CD4-positive, alpha-beta memory T cell (primary cell): ENCODE measurements at regions of chr12 and their contacts with region 1.

Region 1: DNA sequence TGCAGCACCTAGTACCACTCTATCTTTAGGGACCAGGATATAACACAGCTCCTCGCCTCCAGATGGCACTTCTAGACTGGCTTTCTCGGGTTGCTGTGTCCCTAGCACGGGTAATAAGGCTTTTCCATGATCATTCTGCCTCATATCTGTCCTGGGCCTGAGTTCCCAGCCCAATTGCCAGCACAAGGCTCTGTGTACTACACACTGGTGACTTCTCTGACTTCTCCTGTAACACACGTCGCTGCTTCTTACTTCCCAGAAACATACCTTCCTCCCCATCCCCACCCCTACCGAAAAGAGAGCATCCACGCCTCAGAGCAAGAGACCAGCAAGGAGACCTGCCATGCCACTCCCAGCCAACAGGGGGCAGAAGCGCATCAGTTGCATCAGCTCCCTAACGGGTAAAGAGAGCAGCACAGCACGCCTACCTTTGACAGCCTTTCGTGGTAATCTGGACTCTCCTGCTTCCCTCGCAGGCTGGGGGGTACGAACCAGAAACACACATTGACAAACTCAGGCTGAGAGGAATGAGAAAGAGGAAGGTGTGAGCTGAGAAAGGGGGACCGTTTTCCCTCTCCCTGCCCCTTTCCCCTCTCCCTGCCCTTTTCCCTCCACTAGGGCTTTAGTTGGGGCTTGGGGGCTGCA is 21.2 kb upstream of the ZNF740 start:
- DNase-seq: peak; percentile 83 to 85 (median 85)
- H3K4me3 ChIP-seq: no peak overlapping the region
- H3K4me3 Mint-ChIP-seq: peak overlapping the region in 2 of 8 donors; percentile 2 to 54
- H3K27ac ChIP-seq: no peak overlapping the region
- H3K27ac Mint-ChIP-seq: peak overlapping the region in 4 of 7 donors; percentile 3 to 87 (median 44)
- H3K4me1 ChIP-seq: peaks cover 10% of the 10 kb centered on the region
- H3K4me1 Mint-ChIP-seq: peaks cover 5 to 8% (median 6%) of the 10 kb centered on the region in 4 donors
- H3K27me3 ChIP-seq: no peaks in the 10 kb centered on the region
- H3K27me3 Mint-ChIP-seq: no peaks in the 10 kb centered on the region

Region 2: GRCh38 chr12:53065975-53066931 is 93.1 kb before region 1 on chr12:
- CTCF ChIA-PET with region 1: interaction called, 32 read pairs
- POLR2A ChIA-PET with region 1: no interaction called
- intact Hi-C with region 1: no loop called
- DNase-seq: peak; percentile 48 to 64 (median 57)
- H3K4me3 ChIP-seq: no peak overlapping the region
- H3K4me3 Mint-ChIP-seq: no peak overlapping the region
- H3K27ac ChIP-seq: no peak overlapping the region
- H3K27ac Mint-ChIP-seq: peak overlapping the region in 6 of 7 donors; percentile 54 to 89 (median 68)
- H3K4me1 ChIP-seq: peaks cover 7% of the 10 kb centered on the region
- H3K4me1 Mint-ChIP-seq: peaks cover 9 to 19% (median 12%) of the 10 kb centered on the region in 4 donors
- H3K27me3 ChIP-seq: no peaks in the 10 kb centered on the region
- H3K27me3 Mint-ChIP-seq: no peaks in the 10 kb centered on the region

Region 3: GRCh38 chr12:53190108-53190729 is 30.9 kb after region 1 on chr12:
- CTCF ChIA-PET with region 1: interaction called, 65 read pairs
- POLR2A ChIA-PET with region 1: interaction called, 9 read pairs
- intact Hi-C with region 1: loop called (anchors 1 kb)
- DNase-seq: peak; percentile 46 to 64 (median 52)
- H3K4me3 ChIP-seq: no peak overlapping the region
- H3K4me3 Mint-ChIP-seq: no peak overlapping the region
- H3K27ac ChIP-seq: no peak overlapping the region
- H3K27ac Mint-ChIP-seq: peak overlapping the region in 6 of 7 donors; percentile 51 to 79 (median 66)
- H3K4me1 ChIP-seq: peaks cover 13% of the 10 kb centered on the region
- H3K4me1 Mint-ChIP-seq: peaks cover 8 to 22% (median 11%) of the 10 kb centered on the region in 4 donors
- H3K27me3 ChIP-seq: no peaks in the 10 kb centered on the region
- H3K27me3 Mint-ChIP-seq: no peaks in the 10 kb centered on the region

Region 4: DNA sequence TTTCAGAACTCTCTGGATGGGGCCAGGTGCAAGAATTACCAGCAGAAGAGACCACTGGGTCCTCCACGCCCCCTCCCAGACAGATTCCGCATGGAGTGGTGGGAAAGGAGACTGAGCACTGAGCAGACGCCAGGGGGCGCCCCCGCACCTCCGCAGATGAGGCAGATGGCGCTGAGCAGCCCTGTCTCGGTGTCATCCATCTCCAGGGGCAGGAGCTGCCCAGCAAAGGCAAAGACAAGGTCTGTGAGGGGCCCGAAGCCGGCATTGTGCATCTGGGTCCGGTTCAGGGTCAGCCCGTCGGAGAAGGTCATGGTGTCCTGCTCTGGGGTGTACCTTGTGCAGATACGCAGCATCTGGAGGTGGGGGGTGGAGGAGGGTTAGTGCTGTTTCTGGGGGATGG is 54.0 kb after region 1 on chr12:
- CTCF ChIA-PET with region 1: interaction called, 52 read pairs
- POLR2A ChIA-PET with region 1: interaction called, 12 read pairs
- intact Hi-C with region 1: loop called (anchors 2 kb)
- DNase-seq: peak; percentile 77 to 84 (median 78)
- H3K4me3 ChIP-seq: no peak overlapping the region
- H3K4me3 Mint-ChIP-seq: peak overlapping the region in 1 of 8 donors; percentile 41
- H3K27ac ChIP-seq: peak overlapping the region; percentile 36
- H3K27ac Mint-ChIP-seq: peak overlapping the region; percentile 46 to 97 (median 87)
- H3K4me1 ChIP-seq: peaks cover 84% of the 10 kb centered on the region
- H3K4me1 Mint-ChIP-seq: peaks cover 45 to 81% (median 68%) of the 10 kb centered on the region in 4 donors
- H3K27me3 ChIP-seq: no peaks in the 10 kb centered on the region
- H3K27me3 Mint-ChIP-seq: no peaks in the 10 kb centered on the region

Region 5: DNA sequence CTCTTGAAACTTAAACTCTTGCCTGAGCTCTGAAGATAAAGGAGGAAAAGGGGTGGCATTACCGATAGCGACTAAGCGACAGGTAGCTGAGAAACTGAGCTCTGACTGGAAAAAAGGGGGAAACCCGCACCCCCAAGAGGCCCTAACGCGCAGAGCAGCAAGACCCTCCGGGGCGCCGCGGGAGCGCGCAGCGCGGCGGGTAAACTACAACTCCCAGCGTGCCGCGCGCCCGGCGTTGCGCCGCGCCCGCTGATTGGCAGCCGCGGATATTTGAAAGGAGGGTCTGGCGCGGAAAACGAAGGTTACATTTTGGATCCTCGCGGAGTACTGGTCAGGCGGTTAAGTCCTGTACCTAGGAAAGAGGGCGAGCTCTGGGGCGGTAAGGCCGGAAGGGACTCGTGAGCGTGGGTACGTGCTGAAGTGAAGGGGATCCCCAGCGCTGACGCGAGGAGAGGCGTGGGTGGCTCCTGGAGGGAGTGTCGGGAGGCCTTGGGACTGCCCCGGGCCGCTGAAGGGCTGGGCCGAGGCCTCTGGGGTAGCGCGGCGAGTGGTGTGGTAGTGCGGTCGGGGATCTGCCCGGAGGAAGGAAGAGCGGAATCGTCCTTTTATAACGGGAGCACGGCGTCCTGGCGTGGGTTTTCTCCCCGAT is 108.8 kb after region 1 on chr12 and contains the start of gene ESPL1:
- CTCF ChIA-PET with region 1: interaction called, 45 read pairs
- POLR2A ChIA-PET with region 1: interaction called, 4 read pairs
- intact Hi-C with region 1: loop called (anchors 1 kb)
- DNase-seq: peak; percentile 78 to 82 (median 81)
- H3K4me3 ChIP-seq: peak within 1 kb of the TSS; percentile 76 to 91
- H3K4me3 Mint-ChIP-seq: peak within 1 kb of the TSS; percentile 93 to 100 (median 96)
- H3K27ac ChIP-seq: peak within 1 kb of the TSS; percentile 71
- H3K27ac Mint-ChIP-seq: peak within 1 kb of the TSS; percentile 92 to 97 (median 95)
- H3K4me1 ChIP-seq: peaks cover 10% of the 10 kb centered on the region
- H3K4me1 Mint-ChIP-seq: peaks cover 11 to 29% (median 19%) of the 10 kb centered on the region in 4 donors
- H3K27me3 ChIP-seq: no peaks in the 10 kb centered on the region
- H3K27me3 Mint-ChIP-seq: no peaks in the 10 kb centered on the region
- total RNA-seq, gene ESPL1: 0.20 to 0.55 TPM

Region 6: GRCh38 chr12:53344824-53345485 is 185.6 kb after region 1 on chr12:
- CTCF ChIA-PET with region 1: interaction called, 20 read pairs
- POLR2A ChIA-PET with region 1: interaction called, 3 read pairs
- intact Hi-C with region 1: loop called (anchors 1 kb)
- DNase-seq: peak; percentile 62 to 66 (median 65)
- H3K4me3 ChIP-seq: peak overlapping the region in 1 of 2 donors; percentile 73
- H3K4me3 Mint-ChIP-seq: peak overlapping the region; percentile 94 to 99 (median 98)
- H3K27ac ChIP-seq: peak overlapping the region; percentile 44
- H3K27ac Mint-ChIP-seq: peak overlapping the region; percentile 68 to 97 (median 94)
- H3K4me1 ChIP-seq: peaks cover 7% of the 10 kb centered on the region
- H3K4me1 Mint-ChIP-seq: peaks cover 11 to 18% (median 14%) of the 10 kb centered on the region in 4 donors
- H3K27me3 ChIP-seq: no peaks in the 10 kb centered on the region
- H3K27me3 Mint-ChIP-seq: no peaks in the 10 kb centered on the region